Activated naive CD4-positive, alpha-beta T cell treated with anti-CD3 and anti-CD28 coated beads for 36 hours (primary cell): ENCODE measurements at regions of chr15 and their contacts with region 1.

Region 1: GRCh38 chr15:75446151-75446550 is 5.3 kb downstream of the SIN3A start:
- DNase-seq: peak; percentile 18
- H3K4me3 Mint-ChIP-seq: no peak overlapping the region
- H3K27ac Mint-ChIP-seq: peak overlapping the region; percentile 74
- H3K4me1 Mint-ChIP-seq: peaks cover 70% of the 10 kb centered on the region
- H3K27me3 Mint-ChIP-seq: no peaks in the 10 kb centered on the region

Region 2: GRCh38 chr15:75407083-75407482 is 39.1 kb before region 1 on chr15:
- CTCF ChIA-PET with region 1: no interaction called
- intact Hi-C with region 1: loop called (anchors 2 kb)
- DNase-seq: no peak
- H3K4me3 Mint-ChIP-seq: no peak overlapping the region
- H3K27ac Mint-ChIP-seq: peak overlapping the region; percentile 57
- H3K4me1 Mint-ChIP-seq: peaks cover 29% of the 10 kb centered on the region
- H3K27me3 Mint-ChIP-seq: no peaks in the 10 kb centered on the region